ENCODE measurements at regions of chr18 and their contacts with region 1.

Region 1: DNA sequence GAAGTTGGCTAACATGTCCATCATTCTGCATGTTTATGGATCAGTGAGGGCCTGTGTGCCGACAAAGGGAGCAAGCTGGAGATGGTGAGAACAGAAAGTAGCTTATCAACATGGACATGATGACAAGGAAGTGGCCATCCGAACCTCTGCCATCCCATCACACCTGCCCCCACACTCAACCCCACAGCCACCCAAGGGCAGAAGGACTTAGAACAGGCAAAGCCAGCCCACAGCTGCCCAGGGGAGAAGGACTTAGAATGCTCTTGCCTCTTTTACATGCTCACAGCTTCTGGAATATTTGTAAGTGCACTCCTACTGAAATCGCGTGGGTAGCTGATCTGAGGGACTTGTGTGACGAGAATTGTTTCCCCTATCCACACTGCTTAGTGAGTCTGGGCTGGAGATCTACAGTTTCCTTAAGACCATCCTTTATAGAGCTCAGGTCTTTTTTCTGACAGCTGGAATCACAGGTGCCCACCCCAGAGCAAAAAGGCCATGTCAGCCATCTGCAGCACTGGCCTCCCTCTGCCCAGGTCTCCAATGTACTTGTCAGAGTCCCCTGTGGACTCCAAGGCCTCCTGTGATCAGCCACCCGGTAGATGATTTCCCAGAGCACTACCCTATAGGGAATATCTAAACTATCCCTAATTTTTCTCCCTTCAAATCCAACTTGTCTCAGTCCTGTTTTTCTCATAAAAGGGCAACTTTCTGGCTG is 154.1 kb downstream of the SMAD7 start:
- DNase-seq: no peak
- H3K4me3 ChIP-seq: no peak overlapping the region
- H3K27ac ChIP-seq: no peak overlapping the region
- H3K4me1 ChIP-seq: no peaks in the 10 kb centered on the region
- H3K27me3 ChIP-seq: no peaks in the 10 kb centered on the region
- CTCF ChIP-seq: no peak

Region 2: GRCh38 chr18:48519431-48520100 is 277.1 kb before region 1 on chr18:
- CTCF ChIA-PET with region 1: no interaction called
- POLR2A ChIA-PET with region 1: interaction called, 25 read pairs
- intact Hi-C with region 1: no loop called
- DNase-seq: no peak
- H3K4me3 ChIP-seq: no peak overlapping the region
- H3K27ac ChIP-seq: no peak overlapping the region
- H3K4me1 ChIP-seq: no peaks in the 10 kb centered on the region
- H3K27me3 ChIP-seq: peaks cover 9% of the 10 kb centered on the region
- CTCF ChIP-seq: no peak

Region 3: DNA sequence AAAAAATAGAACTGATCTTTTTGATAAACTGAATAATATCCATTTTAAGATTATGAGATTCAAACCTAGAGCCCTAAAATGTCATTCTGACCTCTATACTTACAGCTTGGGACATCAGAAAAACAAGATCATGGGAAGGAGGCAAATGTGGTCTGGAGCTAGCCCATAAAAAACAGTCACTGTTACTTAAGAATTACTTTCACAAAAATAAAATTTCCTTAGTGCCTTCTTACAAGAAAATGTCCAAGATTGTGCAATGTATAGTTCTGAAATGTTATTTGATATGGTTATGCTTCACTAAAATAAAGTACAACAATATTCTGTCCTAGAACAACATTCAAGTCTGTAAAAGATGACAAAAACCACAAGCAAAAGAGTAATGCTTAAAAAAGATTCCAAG is 416.2 kb after region 1 on chr18:
- CTCF ChIA-PET with region 1: no interaction called
- POLR2A ChIA-PET with region 1: no interaction called
- intact Hi-C with region 1: no loop called
- DNase-seq: no peak
- H3K4me3 ChIP-seq: no peak overlapping the region
- H3K27ac ChIP-seq: no peak overlapping the region
- H3K4me1 ChIP-seq: no peaks in the 10 kb centered on the region
- H3K27me3 ChIP-seq: no peaks in the 10 kb centered on the region
- CTCF ChIP-seq: no peak

Region 4: GRCh38 chr18:49677762-49678413 is 881.2 kb after region 1 on chr18:
- CTCF ChIA-PET with region 1: no interaction called
- POLR2A ChIA-PET with region 1: no interaction called
- intact Hi-C with region 1: no loop called
- DNase-seq: no peak
- H3K4me3 ChIP-seq: no peak overlapping the region
- H3K27ac ChIP-seq: no peak overlapping the region
- H3K4me1 ChIP-seq: no peaks in the 10 kb centered on the region
- H3K27me3 ChIP-seq: peaks cover 6% of the 10 kb centered on the region
- CTCF ChIP-seq: no peak

Measured in A673 (cell line).